ENCODE measurements at regions of chr18 and their contacts with region 1.

Region 1: GRCh38 chr18:62249478-62250097 is 62.5 kb downstream of the RELCH start:
- DNase-seq: no peak
- H3K4me3 ChIP-seq: no peak overlapping the region
- H3K27ac ChIP-seq: no peak overlapping the region
- H3K4me1 ChIP-seq: no peaks in the 10 kb centered on the region
- H3K27me3 ChIP-seq: no peaks in the 10 kb centered on the region
- CTCF ChIP-seq: peak; percentile 64 to 78 (median 74)
- EP300 ChIP-seq: no peak
- POLR2A ChIP-seq: no peak

Region 2: DNA sequence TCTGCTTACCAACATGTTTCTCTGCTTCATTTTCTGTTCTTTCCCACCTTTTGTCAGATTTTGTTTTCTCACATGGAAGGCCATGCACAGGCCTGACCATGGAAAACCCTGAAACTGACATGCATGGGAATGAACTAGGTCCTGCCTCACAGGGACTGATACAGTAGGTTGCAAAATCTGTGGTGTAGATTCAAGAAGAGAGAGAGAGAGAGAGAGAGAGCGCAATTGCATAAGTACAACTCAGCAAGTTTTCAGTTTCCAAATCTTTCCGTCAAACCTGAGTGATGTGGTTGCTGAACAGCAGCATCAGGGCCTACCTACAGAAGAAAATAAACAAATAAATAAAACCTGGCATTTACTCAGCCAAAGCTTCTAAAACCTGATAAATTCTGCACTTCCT is 269.2 kb before region 1 on chr18:
- intact Hi-C with region 1: no loop called
- DNase-seq: peak; percentile 17
- H3K4me3 ChIP-seq: no peak overlapping the region
- H3K27ac ChIP-seq: no peak overlapping the region
- H3K4me1 ChIP-seq: peaks cover 0 to 11% (median 4%) of the 10 kb centered on the region in 4 donors
- H3K27me3 ChIP-seq: no peaks in the 10 kb centered on the region
- CTCF ChIP-seq: no peak
- EP300 ChIP-seq: no peak
- POLR2A ChIP-seq: no peak

Region 3: DNA sequence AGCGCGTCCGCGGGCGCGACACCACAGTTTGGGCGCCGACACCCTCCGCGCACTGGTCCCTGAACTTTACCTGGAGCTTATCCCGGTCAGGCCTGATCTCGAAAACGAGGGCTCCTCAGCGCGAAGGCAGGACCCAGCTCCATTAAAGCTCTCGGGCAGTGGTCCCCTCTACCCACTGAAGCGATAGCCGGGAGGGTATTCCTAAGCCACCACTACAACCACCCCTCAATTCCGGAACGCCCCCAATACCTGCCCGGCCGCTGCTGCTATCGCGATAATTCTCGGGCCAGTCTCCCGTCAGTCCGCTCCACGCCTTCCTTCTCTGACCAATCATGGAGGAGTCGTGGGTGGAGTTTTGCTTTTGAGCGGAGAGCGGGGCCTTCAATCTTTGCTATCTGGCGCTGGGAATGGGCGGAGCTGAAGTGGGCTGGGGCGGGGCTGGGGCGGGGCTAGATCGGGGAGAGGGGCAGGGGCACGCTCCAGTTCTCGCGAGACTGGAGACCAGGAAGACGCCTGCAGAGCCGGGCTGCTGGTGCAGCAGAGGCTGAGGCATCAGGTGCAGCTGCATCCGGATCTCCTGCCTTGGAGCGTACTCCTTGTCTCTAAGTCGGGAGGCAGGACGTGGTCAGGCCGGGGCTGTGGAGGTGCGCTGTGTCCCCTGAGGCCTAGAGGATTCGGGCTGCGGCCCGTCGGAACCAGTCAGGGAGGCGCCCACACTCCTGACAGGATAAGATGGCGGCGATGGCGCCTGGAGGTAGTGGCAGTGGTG is 62.6 kb before region 1 on chr18 and contains the starts of genes PIGN and RELCH:
- intact Hi-C with region 1: loop called (anchors 2 kb)
- DNase-seq: peak; percentile 99
- H3K4me3 ChIP-seq: peak within 1 kb of the TSS; percentile 88 to 98 (median 94)
- H3K27ac ChIP-seq: peak within 1 kb of the TSS; percentile 78 to 89 (median 84)
- H3K4me1 ChIP-seq: peaks cover 30 to 60% (median 50%) of the 10 kb centered on the region in 4 donors
- H3K27me3 ChIP-seq: no peaks in the 10 kb centered on the region
- CTCF ChIP-seq: no peak
- EP300 ChIP-seq: no peak
- POLR2A ChIP-seq: peak; percentile 43
- total RNA-seq, gene PIGN: 10.6 to 16.9 (median 12.4) TPM
- total RNA-seq, gene RELCH: 15.9 to 17.9 (median 17.5) TPM

Measured in esophagus muscularis mucosa (tissue), 4 donors.